Dorsolateral prefrontal cortex (tissue), 120 donors: ENCODE measurements at regions of chr10 and their contacts with region 1.

Region 1: DNA sequence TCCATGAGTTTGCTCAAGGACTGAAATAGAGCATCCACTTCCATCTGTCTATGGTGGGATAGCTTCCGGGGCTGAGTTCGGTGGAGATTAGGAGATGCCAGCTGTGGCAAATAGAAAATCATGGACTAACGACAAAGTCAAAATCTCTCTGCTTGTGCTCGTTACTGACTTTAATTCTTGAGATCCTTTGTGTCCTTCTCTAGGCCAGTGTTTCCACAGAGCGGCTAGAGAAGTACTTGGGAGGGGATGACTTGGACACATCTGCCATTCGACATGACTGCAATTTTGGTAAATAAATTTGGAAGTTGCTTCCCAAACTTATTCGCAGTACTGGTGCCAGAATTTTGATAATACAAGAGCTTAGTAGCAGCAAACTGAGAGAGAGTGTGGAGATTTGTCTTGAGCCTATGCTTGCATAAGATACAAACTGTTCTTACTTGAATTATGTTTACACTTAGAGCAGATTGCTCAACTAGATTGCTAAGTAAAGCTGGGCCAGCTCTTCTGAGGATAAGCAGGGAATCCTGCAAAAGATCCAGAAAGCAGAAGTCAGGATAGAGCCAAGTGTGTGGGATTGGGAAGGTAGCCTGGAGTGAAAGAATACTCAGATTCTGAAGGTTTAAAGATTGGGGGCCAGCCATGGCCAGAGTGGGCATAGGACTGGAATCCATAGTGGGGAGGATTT is 27.6 kb downstream of the ABCC2 start:
- DNase-seq: peak in 1 of 10 donors; percentile 27
- H3K4me3 ChIP-seq: no peak overlapping the region
- H3K27ac ChIP-seq: peak overlapping the region in 38 of 59 donors; percentile 2 to 82 (median 56)
- H3K27me3 ChIP-seq: no peaks in the 10 kb centered on the region
- CTCF ChIP-seq: no peak

Region 2: GRCh38 chr10:99676426-99676825 is 133.6 kb before region 1 on chr10:
- intact Hi-C with region 1: no loop called
- DNase-seq: no peak
- H3K4me3 ChIP-seq: no peak overlapping the region
- H3K27ac ChIP-seq: no peak overlapping the region
- H3K27me3 ChIP-seq: no peaks in the 10 kb centered on the region
- CTCF ChIP-seq: no peak

Region 3: DNA sequence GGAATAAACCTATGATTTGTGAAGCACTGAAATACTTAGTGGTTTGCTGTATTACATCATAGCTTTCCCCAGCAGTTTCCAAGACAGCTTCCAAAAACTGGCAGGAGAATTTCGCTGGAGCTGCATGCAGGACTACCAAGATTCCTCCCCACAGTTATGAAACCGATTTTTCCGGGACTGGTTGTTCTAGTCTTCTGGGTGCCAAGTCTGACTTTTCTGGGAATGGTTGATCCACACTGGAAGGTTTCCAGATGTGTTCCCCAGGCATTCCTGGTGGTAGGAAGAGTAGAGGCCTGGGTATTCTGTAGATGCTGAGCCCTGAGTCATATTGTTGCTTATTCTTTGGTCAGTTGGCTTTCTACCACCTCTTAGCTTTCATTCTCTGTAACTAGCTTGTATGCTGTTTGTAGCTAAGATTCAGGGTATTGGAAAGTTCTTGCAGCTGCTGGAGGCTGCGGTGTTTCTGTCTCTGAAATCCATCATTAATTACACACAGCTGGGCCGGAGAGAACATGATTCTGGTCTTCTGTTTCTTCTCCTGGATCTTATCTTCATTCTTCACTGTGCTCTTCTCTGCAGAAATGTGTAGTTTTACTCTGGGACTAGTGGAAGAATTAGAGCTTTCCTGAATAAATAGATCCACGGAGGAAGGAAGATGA is 21.3 kb before region 1 on chr10:
- intact Hi-C with region 1: loop called in 1 of 2 experiments (anchors 1 kb)
- DNase-seq: peak in 2 of 10 donors; percentile 22 to 39
- H3K4me3 ChIP-seq: no peak overlapping the region
- H3K27ac ChIP-seq: peak overlapping the region in 52 of 59 donors; percentile 3 to 81 (median 55)
- H3K27me3 ChIP-seq: no peaks in the 10 kb centered on the region
- CTCF ChIP-seq: no peak